CD4-positive, alpha-beta T cell (primary cell): ENCODE measurements at regions of chr14 and their contacts with region 1.

Region 1: DNA sequence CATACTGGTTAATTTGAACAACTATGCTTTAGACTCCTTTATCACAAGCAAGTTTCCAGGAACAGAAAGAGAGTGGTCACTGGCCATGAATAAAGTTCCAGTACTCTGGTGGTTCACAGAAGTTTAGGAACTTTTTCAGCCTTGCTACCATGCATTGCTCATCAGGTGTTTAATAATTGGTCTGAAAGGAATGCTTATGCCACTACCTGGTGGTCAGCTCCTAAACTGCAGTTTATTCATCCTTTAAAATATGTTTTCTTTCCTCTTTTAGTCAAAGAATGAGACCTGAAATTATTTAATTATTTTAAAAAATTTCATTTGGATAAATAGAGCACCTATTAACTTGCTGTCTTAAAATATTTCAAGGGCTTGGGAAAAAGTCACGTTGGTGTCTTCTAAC is 260.1 kb upstream of the OR4E1 start:
- DNase-seq: peak in 3 of 14 experiments; percentile 52 to 57 (median 55)
- ATAC-seq: no peak
- H3K4me3 ChIP-seq: no peak overlapping the region
- H3K4me3 Mint-ChIP-seq: no peak overlapping the region
- H3K27ac ChIP-seq: no peak overlapping the region
- H3K27ac Mint-ChIP-seq: no peak overlapping the region
- H3K4me1 ChIP-seq: no peaks in the 10 kb centered on the region
- H3K4me1 Mint-ChIP-seq: peaks cover 12% of the 10 kb centered on the region
- H3K27me3 ChIP-seq: no peaks in the 10 kb centered on the region
- H3K27me3 Mint-ChIP-seq: no peaks in the 10 kb centered on the region
- CTCF ChIP-seq: peak; percentile 31

Region 2: GRCh38 chr14:21510735-21511657 is 422.7 kb before region 1 on chr14 and contains the start of gene METTL3:
- CTCF ChIA-PET with region 1: no interaction called
- POLR2A ChIA-PET with region 1: no interaction called
- intact Hi-C with region 1: no loop called
- DNase-seq: peak; percentile 88 to 98 (median 90)
- ATAC-seq: peak; percentile 99
- H3K4me3 ChIP-seq: peak within 1 kb of the TSS; percentile 83
- H3K4me3 Mint-ChIP-seq: peak within 1 kb of the TSS; percentile 98
- H3K27ac ChIP-seq: peak within 1 kb of the TSS; percentile 82 to 84
- H3K27ac Mint-ChIP-seq: peak within 1 kb of the TSS; percentile 98
- H3K4me1 ChIP-seq: peaks cover 30% of the 10 kb centered on the region
- H3K4me1 Mint-ChIP-seq: peaks cover 45% of the 10 kb centered on the region
- H3K27me3 ChIP-seq: no peaks in the 10 kb centered on the region
- H3K27me3 Mint-ChIP-seq: no peaks in the 10 kb centered on the region
- CTCF ChIP-seq: no peak
- total RNA-seq, gene METTL3: 31.9 to 34.5 TPM

Region 3: GRCh38 chr14:21868442-21869046 is 65.1 kb before region 1 on chr14:
- CTCF ChIA-PET with region 1: no interaction called
- POLR2A ChIA-PET with region 1: no interaction called
- intact Hi-C with region 1: loop called (anchors 5 kb)
- DNase-seq: peak; percentile 64 to 86 (median 75)
- ATAC-seq: peak; percentile 92
- H3K4me3 ChIP-seq: peak overlapping the region; percentile 23
- H3K4me3 Mint-ChIP-seq: peak overlapping the region; percentile 71
- H3K27ac ChIP-seq: no peak overlapping the region
- H3K27ac Mint-ChIP-seq: peak overlapping the region; percentile 18
- H3K4me1 ChIP-seq: peaks cover 1% of the 10 kb centered on the region
- H3K4me1 Mint-ChIP-seq: peaks cover 36% of the 10 kb centered on the region
- H3K27me3 ChIP-seq: no peaks in the 10 kb centered on the region
- H3K27me3 Mint-ChIP-seq: no peaks in the 10 kb centered on the region
- CTCF ChIP-seq: peak; percentile 78

Region 4: DNA sequence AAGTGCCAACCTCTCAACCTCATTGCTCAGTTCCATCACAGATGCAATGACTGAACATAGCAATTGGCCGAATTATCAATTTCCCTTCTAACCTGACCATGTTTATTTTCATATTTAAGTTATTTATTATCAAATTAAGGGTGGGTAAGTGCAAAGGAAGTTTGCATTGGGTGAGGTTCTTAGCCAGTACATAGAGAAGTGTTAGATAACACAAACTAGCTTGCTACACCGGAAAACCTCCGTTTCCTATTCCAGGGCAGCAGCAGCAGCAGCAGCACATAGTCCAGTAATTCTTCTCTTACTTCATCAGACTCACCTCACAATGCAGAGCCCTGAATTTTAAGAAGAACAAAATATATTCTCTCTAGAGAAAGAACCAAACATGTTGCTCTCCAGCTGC is 59.5 kb before region 1 on chr14:
- CTCF ChIA-PET with region 1: no interaction called
- POLR2A ChIA-PET with region 1: no interaction called
- intact Hi-C with region 1: loop called (anchors 5 kb)
- DNase-seq: peak in 4 of 14 experiments; percentile 27 to 71 (median 38)
- ATAC-seq: peak; percentile 70
- H3K4me3 ChIP-seq: peak overlapping the region; percentile 21
- H3K4me3 Mint-ChIP-seq: peak overlapping the region; percentile 74
- H3K27ac ChIP-seq: peak overlapping the region; percentile 0 to 30
- H3K27ac Mint-ChIP-seq: peak overlapping the region; percentile 89
- H3K4me1 ChIP-seq: peaks cover 20% of the 10 kb centered on the region
- H3K4me1 Mint-ChIP-seq: peaks cover 45% of the 10 kb centered on the region
- H3K27me3 ChIP-seq: no peaks in the 10 kb centered on the region
- H3K27me3 Mint-ChIP-seq: no peaks in the 10 kb centered on the region
- CTCF ChIP-seq: no peak

Region 5: DNA sequence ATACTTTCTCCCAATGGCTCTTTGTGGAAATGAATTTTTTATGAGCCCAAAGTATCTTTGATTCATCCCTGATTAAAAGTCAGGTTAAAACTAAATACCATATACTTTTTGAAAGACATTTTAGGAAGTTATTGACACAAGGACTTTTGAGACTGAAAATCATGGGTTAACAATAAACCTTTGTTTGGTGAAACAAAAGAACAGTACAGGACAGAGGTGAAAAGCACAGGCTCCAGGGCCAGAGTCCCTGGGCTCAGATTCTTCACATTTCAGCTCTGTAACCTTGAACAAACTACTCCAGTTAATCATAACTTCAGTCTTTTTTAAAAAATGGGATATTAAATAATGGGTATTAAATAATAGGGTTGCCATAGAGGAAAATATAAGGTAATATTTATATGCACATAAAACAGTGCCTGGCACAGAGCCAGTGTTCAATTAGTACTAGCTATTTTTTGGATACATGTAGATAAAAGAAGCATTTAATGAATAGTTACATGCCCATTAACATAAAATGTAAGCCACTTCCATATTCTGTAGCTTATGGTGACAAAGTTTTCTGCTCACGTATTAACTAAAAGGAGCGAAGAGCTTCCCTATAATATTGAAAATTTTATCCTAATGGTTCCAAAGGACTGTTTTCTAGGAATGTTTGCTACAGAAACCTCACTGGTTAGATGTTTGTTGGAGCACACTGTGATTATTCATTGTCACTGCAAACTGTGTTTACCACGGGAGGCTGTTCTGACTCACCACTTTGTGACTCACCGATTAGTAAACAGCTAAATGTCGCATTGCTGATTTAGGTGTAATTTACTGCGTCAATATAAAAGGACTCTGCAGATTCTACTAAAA is 400.0 kb after region 1 on chr14:
- CTCF ChIA-PET with region 1: no interaction called
- POLR2A ChIA-PET with region 1: no interaction called
- intact Hi-C with region 1: no loop called
- DNase-seq: peak in 1 of 14 experiments; percentile 13
- ATAC-seq: no peak
- H3K4me3 ChIP-seq: no peak overlapping the region
- H3K4me3 Mint-ChIP-seq: no peak overlapping the region
- H3K27ac ChIP-seq: no peak overlapping the region
- H3K27ac Mint-ChIP-seq: no peak overlapping the region
- H3K4me1 ChIP-seq: no peaks in the 10 kb centered on the region
- H3K4me1 Mint-ChIP-seq: no peaks in the 10 kb centered on the region
- H3K27me3 ChIP-seq: no peaks in the 10 kb centered on the region
- H3K27me3 Mint-ChIP-seq: no peaks in the 10 kb centered on the region
- CTCF ChIP-seq: no peak